GM13976 (cell line): ENCODE measurements at regions of chr19 and their contacts with region 1.

Region 1: DNA sequence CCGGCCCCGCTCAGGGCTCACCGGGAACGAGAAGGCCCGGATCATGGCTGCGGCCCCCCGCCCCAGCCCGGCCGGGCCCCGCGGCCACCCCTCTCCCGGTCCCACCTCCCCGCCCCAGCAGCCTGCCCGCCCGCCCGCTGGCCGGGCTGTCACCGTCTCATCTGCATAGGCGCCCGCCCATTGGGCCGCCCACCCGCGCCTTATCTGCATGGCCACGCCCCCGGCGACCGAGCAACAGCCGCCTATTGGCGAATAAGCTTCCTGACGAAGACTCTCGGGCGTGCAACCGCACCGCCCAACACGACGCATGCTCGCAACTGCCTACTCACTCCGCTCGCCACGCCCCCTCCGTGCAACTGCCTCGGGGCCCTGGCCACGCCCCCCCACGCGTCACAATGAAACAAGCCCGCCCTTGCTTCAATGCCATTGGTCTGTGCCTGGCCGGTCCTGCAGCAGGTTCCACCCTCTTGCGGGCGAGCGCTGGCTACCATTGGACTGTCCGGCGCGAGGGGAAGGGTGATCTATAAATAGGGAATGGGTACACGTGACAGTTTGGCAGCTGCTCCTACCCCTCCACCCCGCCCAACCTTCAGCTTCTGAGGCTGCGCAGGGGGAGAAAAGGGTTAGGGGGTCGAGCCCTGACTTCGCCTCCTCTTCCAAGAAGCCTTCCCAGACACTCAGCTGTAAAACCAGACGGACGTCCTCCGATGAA is at the start of gene DACT3:
- DNase-seq: peak; percentile 100
- CTCF ChIP-seq: no peak

Region 2: DNA sequence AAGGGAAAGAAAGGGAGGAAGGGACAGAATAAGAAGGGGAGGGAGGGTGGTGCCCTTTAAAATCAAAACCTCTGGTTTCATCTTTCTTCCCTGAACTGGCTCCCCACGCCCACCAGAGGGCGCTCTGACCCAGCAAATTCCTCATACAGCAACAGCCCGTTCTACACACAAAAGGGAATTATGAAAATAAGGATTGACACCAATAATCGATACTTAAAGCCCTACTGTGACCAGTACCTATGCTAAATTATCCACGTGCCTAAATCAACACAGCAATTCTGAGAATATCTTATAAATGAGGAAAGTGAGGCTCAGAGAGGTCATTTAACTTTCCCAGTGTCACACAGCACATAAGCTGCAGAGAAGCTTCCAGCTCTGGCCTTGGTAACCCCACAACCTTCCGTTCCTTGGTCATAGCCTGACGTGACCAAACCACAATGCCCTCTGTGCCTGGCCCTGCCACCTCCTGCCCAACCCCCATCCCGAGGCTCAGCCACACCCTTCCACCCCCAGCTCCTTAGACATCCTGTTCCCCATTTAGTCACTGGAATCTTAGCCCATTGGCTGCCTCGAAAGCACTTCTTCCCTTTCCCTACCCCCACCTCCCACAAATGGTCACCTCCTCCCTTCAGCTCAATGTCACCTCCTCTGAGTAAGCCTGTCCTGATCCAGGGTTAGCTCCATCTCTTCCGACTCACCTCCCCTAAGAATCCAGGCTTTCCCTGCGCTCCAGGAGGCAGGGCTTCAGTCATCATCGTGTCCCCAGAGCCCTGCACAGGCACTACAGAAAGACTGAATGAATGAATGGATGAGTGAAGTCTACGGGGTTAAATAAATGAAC is 131.3 kb before region 1 on chr19:
- in situ Hi-C with region 1: loop called (anchors 10 kb)
- DNase-seq: peak; percentile 87
- CTCF ChIP-seq: peak; percentile 83

Region 3: DNA sequence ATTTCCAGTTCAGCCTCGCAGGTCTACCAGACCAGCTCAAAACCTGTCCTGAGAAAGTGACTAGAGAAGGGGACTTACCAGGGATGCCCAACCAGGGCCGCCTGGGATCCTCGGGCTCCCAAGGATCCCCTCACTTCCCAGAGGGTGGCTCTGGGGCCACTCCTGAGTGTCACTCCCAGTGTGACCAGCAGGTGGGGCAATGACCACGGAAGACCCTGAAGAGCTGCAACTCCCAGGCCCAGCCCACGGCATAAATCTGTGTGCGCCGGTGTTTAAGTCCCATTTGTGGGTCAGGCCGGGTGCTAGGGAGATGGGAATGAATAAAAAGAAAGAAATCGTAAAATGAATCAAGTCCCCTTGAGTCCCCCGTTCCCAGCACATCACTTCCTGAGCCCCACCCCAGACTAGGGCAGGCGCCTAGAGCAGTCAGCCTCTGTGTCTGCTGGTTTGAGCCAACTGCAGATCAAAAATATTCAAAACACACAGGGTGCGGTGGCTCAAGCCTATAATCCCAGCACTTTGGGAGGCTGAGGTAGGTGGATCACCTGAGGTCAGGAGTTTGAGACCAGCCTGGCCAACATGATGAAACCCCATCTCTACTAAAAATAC is 47.0 kb before region 1 on chr19:
- in situ Hi-C with region 1: loop called (anchors 5 kb)
- DNase-seq: peak; percentile 86
- CTCF ChIP-seq: peak; percentile 86